CD4-positive, alpha-beta memory T cell (primary cell): ENCODE measurements at regions of chr17 and their contacts with region 1.

Region 1: DNA sequence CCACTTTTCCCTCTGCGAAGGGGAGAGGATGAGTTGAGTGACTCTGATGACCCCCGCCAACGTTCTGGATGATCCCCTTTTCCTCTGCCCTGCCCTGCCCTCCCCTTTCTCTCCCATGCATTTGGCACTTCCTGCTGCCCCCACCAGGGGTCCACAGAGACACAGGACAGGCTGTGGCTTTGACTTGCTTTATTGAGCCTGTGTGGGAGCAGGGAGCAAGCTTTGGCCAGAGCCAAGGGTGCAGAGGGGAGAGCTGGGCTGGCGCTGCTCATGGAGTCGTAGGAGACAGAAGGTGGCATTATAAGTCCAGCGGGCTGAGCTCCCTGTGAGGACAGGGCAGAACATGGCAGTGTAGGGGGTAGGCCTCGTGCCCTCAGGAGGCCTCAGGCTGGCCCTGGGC is 1.6 kb downstream of the PPY start:
- DNase-seq: no peak
- H3K4me3 ChIP-seq: no peak overlapping the region
- H3K4me3 Mint-ChIP-seq: no peak overlapping the region
- H3K27ac ChIP-seq: no peak overlapping the region
- H3K27ac Mint-ChIP-seq: no peak overlapping the region
- H3K4me1 ChIP-seq: peaks cover 4% of the 10 kb centered on the region
- H3K4me1 Mint-ChIP-seq: peaks cover 1 to 9% (median 4%) of the 10 kb centered on the region in 4 donors
- H3K27me3 ChIP-seq: no peaks in the 10 kb centered on the region
- H3K27me3 Mint-ChIP-seq: peaks cover 4 to 7% of the 10 kb centered on the region in 2 donors

Region 2: GRCh38 chr17:43085474-43085873 is 855.2 kb before region 1 on chr17:
- CTCF ChIA-PET with region 1: no interaction called
- POLR2A ChIA-PET with region 1: no interaction called
- intact Hi-C with region 1: no loop called
- DNase-seq: no peak
- H3K4me3 ChIP-seq: no peak overlapping the region
- H3K4me3 Mint-ChIP-seq: no peak overlapping the region
- H3K27ac ChIP-seq: no peak overlapping the region
- H3K27ac Mint-ChIP-seq: no peak overlapping the region
- H3K4me1 ChIP-seq: no peaks in the 10 kb centered on the region
- H3K4me1 Mint-ChIP-seq: no peaks in the 10 kb centered on the region
- H3K27me3 ChIP-seq: no peaks in the 10 kb centered on the region
- H3K27me3 Mint-ChIP-seq: no peaks in the 10 kb centered on the region

Region 3: GRCh38 chr17:43994272-43995149 is 53.9 kb after region 1 on chr17:
- CTCF ChIA-PET with region 1: interaction called, 20 read pairs
- POLR2A ChIA-PET with region 1: no interaction called
- intact Hi-C with region 1: loop called (anchors 1 kb)
- DNase-seq: peak; percentile 61 to 69 (median 65)
- H3K4me3 ChIP-seq: no peak overlapping the region
- H3K4me3 Mint-ChIP-seq: peak overlapping the region in 2 of 8 donors; percentile 4 to 51
- H3K27ac ChIP-seq: no peak overlapping the region
- H3K27ac Mint-ChIP-seq: peak overlapping the region in 1 of 7 donors; percentile 13
- H3K4me1 ChIP-seq: peaks cover 10% of the 10 kb centered on the region
- H3K4me1 Mint-ChIP-seq: peaks cover 0 to 3% (median under 1%) of the 10 kb centered on the region in 4 donors
- H3K27me3 ChIP-seq: peaks cover 3% of the 10 kb centered on the region
- H3K27me3 Mint-ChIP-seq: peaks cover 8 to 9% of the 10 kb centered on the region in 2 donors

Region 4: DNA sequence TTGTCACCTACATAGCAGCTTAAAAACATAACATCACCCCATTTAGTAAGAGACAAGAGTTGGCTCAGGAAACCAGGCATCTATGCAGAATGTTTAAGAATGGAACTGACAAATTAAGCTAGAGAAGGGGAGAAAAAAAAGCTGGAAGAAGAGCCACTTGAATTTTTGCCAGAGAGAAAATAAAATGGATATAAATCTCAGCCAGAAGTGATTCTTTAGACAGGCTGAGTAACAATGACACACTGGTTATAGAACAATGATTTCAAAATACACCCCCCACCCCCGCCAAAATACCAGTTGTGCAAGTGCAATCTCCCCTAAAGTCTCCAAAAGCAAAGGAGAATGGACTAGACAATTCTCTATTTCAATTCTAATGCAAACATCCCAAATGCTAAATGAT is 103.4 kb after region 1 on chr17:
- CTCF ChIA-PET with region 1: interaction called, 120 read pairs
- POLR2A ChIA-PET with region 1: interaction called, 5 read pairs
- intact Hi-C with region 1: loop called (anchors 1 kb)
- DNase-seq: no peak
- H3K4me3 ChIP-seq: no peak overlapping the region
- H3K4me3 Mint-ChIP-seq: no peak overlapping the region
- H3K27ac ChIP-seq: no peak overlapping the region
- H3K27ac Mint-ChIP-seq: peak overlapping the region in 3 of 7 donors; percentile 18 to 35 (median 34)
- H3K4me1 ChIP-seq: peaks cover 8% of the 10 kb centered on the region
- H3K4me1 Mint-ChIP-seq: peaks cover 11 to 16% (median 13%) of the 10 kb centered on the region in 4 donors
- H3K27me3 ChIP-seq: no peaks in the 10 kb centered on the region
- H3K27me3 Mint-ChIP-seq: no peaks in the 10 kb centered on the region

Region 5: DNA sequence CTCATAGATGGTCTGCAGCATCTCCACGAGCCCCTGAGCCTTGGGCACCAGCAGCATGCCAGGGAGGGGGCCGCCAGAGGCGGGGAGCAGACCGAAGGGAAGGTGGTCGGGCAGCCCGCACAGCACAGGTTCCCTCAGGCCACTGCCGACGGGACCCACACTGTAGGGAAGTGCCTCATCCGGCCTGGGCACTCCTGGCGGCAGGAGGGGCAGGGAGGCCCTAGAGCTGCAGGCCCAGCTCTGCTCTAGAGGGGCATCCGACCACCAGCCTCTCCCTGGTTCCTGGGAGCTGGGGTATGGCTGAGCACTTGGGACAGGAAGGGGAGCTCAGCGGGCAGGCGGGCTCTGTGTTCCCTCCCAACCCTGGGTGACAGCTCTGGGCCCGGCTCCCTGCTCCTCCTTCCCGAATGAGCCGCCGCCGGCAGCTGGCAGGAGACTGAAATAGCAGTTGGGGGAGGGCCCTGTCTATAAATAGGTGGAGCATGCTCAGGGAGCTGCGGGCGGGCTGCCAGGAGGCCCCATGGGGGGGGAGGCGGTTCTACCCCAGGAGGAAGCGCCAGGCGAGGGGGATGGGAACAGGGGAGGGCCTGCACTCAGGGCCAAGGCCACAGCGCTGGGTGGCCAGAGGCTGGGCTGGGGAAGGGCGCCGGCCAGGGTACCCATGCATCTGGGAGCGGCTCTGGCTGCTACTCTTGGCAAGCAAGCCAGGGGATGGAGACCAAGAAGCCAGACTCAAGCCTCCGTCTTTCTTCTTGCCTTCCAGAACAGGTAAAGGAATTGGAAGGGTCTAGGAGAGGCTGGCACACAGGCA is 170.4 kb after region 1 on chr17:
- CTCF ChIA-PET with region 1: interaction called, 18 read pairs
- POLR2A ChIA-PET with region 1: no interaction called
- intact Hi-C with region 1: no loop called
- DNase-seq: peak; percentile 28 to 63 (median 37)
- H3K4me3 ChIP-seq: no peak overlapping the region
- H3K4me3 Mint-ChIP-seq: peak overlapping the region in 1 of 8 donors; percentile 29
- H3K27ac ChIP-seq: no peak overlapping the region
- H3K27ac Mint-ChIP-seq: no peak overlapping the region
- H3K4me1 ChIP-seq: peaks cover 31% of the 10 kb centered on the region
- H3K4me1 Mint-ChIP-seq: peaks cover 7 to 38% (median 21%) of the 10 kb centered on the region in 4 donors
- H3K27me3 ChIP-seq: no peaks in the 10 kb centered on the region
- H3K27me3 Mint-ChIP-seq: no peaks in the 10 kb centered on the region